Calu3 (cell line): ENCODE measurements at regions of chr15 and their contacts with region 1.

Region 1: GRCh38 chr15:92881802-92882696 is 18.1 kb upstream of the CHD2 start:
- DNase-seq: peak; percentile 98
- H3K4me3 Mint-ChIP-seq: peak overlapping the region; percentile 68
- H3K27ac Mint-ChIP-seq: peak overlapping the region; percentile 94
- H3K4me1 Mint-ChIP-seq: peaks cover 47% of the 10 kb centered on the region
- H3K27me3 Mint-ChIP-seq: peaks cover 13% of the 10 kb centered on the region
- CTCF ChIP-seq: no peak

Region 2: DNA sequence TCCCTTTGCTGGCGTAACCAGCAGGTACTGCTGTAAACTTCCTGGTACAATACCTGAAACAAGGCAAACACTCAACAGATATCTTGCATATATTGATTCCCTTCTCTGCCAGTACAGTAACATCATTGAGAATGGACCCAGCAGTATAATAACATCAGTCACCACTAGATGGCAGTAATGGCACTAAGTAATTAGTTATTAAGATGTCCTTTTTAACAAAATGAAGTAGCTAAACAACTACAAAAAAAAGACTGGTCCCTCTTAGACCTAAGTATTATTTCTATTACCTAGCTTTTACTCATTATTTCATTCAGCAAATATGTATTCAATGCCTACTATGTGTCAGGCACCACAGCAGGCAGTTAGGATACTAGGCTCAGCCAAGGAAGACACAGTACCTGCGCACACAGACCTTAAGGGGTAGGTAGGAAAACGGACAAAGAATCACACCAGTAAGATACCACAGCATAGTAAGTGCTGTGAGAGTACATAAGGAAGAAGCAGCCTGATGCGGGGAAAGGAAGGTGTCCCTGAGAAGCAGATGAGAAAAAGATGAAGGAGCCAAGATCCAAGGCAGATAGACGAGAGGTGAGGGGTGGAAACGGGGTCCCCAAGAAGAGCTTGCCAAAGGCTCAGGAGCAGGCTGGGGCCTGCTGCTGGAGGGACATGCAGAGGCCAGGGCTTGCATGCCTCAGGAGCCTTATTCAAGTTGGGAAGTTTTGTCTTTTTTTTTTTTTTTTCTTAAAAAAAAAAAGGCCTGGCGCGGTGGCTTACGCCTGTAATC is 84.7 kb before region 1 on chr15:
- CTCF ChIA-PET with region 1: interaction called, 10 read pairs
- intact Hi-C with region 1: no loop called
- DNase-seq: peak; percentile 79
- H3K4me3 Mint-ChIP-seq: no peak overlapping the region
- H3K27ac Mint-ChIP-seq: peak overlapping the region; percentile 24
- H3K4me1 Mint-ChIP-seq: peaks cover 23% of the 10 kb centered on the region
- H3K27me3 Mint-ChIP-seq: no peaks in the 10 kb centered on the region
- CTCF ChIP-seq: peak; percentile 31

Region 3: GRCh38 chr15:92831655-92832328 is 50.3 kb before region 1 on chr15:
- CTCF ChIA-PET with region 1: interaction called, 20 read pairs
- intact Hi-C with region 1: loop called (anchors 1 kb)
- DNase-seq: peak; percentile 96
- H3K4me3 Mint-ChIP-seq: peak overlapping the region; percentile 62
- H3K27ac Mint-ChIP-seq: peak overlapping the region; percentile 99
- H3K4me1 Mint-ChIP-seq: peaks cover 32% of the 10 kb centered on the region
- H3K27me3 Mint-ChIP-seq: no peaks in the 10 kb centered on the region
- CTCF ChIP-seq: no peak

Region 4: DNA sequence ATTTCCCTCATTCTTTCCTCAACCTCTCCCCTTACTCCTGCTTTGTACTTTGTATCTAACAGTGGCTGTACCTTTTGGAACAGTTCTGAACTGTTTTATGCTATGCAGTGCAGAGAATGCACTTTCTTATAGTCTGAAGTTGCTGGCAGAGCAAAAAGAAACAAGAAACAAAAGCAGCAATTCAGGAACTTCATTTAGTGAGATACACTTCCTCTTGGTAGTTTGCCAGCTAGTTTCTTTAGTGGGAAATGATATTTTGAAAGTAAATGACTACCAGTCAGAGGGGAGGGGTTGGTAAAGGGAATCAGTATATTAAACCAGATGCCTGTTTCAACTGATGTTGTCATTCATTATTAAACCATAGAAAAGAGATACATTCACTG is 36.9 kb before region 1 on chr15:
- CTCF ChIA-PET with region 1: interaction called, 3 read pairs
- intact Hi-C with region 1: loop called (anchors 2 kb)
- DNase-seq: peak; percentile 36
- H3K4me3 Mint-ChIP-seq: peak overlapping the region; percentile 36
- H3K27ac Mint-ChIP-seq: peak overlapping the region; percentile 87
- H3K4me1 Mint-ChIP-seq: peaks cover 16% of the 10 kb centered on the region
- H3K27me3 Mint-ChIP-seq: no peaks in the 10 kb centered on the region
- CTCF ChIP-seq: no peak